ENCODE measurements at regions of chr6 and their contacts with region 1.

Region 1: GRCh38 chr6:28880894-28881780 is 42.6 kb downstream of the TRIM27 start:
- DNase-seq: peak; percentile 51 to 83 (median 68)
- H3K4me3 ChIP-seq: peak overlapping the region; percentile 33 to 79 (median 64)
- H3K27ac ChIP-seq: peak overlapping the region in 13 of 59 donors; percentile 0 to 55 (median 17)
- H3K27me3 ChIP-seq: peaks cover 0 to 45% (median 2%) of the 10 kb centered on the region in 45 donors
- CTCF ChIP-seq: peak in 4 of 56 donors; percentile 13 to 23 (median 18)

Region 2: GRCh38 chr6:28863604-28864320 is 17.4 kb before region 1 on chr6:
- intact Hi-C with region 1: loop called in 1 of 2 experiments (anchors 2 kb)
- DNase-seq: peak; percentile 67 to 87 (median 79)
- H3K4me3 ChIP-seq: peak overlapping the region; percentile 52 to 97 (median 82)
- H3K27ac ChIP-seq: peak overlapping the region in 56 of 59 donors; percentile 1 to 92 (median 74)
- H3K27me3 ChIP-seq: no peaks in the 10 kb centered on the region
- CTCF ChIP-seq: peak in 17 of 56 donors; percentile 2 to 40 (median 16)

Region 3: DNA sequence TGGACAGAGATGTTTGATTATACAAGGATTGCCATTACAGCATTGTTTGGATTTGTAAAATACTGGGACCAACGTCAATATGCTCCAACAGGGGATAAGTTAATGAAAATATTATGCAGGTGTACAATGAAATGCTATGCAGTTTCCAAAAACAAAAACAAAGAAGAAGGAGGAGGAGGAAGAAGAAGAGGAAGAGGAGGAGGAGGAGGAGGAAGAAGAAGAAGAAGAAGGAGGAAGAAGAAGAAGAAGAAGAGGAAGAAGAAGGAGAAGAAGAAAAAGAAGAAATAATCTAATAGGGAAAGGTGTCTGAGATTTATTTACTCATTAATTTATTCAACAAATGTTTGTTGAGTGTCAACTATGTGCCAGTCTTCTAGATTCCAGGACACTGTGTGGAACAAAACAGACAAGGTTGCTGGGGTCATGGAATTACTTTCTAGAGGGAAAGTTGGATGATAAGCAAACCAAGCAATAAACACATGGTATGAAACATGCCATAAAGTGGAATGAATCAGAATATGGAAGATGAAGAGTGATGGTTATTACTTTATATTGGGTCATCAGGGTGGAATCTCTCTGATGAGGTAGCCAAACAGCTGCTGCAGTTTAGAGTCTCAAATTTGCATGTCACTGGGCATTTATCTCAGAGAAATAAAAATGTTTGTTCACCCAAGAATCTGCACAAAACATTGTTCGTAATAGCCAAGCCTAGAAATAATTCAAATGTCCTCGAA is 48.9 kb after region 1 on chr6:
- intact Hi-C with region 1: no loop called
- DNase-seq: no peak
- H3K4me3 ChIP-seq: no peak overlapping the region
- H3K27ac ChIP-seq: no peak overlapping the region
- H3K27me3 ChIP-seq: peaks cover 0 to 4% (median 0%) of the 10 kb centered on the region in 45 donors
- CTCF ChIP-seq: no peak

Region 4: DNA sequence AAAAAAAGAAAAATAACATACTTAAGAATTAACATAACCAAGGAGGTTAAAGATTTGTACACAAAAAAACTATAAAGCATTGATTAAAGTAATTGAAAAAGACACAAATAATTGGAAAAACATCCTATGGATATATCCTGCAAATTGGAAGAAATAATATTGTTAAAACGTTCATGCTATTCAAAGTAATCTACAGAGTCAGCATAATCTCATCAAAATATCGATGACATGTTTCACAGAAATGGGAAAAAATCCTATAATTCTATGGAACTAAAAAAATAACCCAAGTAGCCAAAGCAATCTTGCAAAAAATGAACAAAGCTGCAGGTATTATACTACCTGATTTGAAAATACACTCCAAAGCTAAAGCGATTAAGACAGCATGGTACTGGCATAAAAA is 464.2 kb after region 1 on chr6:
- intact Hi-C with region 1: no loop called
- DNase-seq: no peak
- H3K4me3 ChIP-seq: no peak overlapping the region
- H3K27ac ChIP-seq: no peak overlapping the region
- H3K27me3 ChIP-seq: peaks cover 0 to 8% (median 0%) of the 10 kb centered on the region in 45 donors
- CTCF ChIP-seq: no peak

Region 5: GRCh38 chr6:30113003-30113759 is 1232.0 kb after region 1 on chr6 and contains the start of gene TRIM31:
- intact Hi-C with region 1: no loop called
- DNase-seq: no peak
- H3K4me3 ChIP-seq: no peak within 1 kb of the TSS
- H3K27ac ChIP-seq: no peak within 1 kb of the TSS
- H3K27me3 ChIP-seq: peaks cover 0 to 89% (median 49%) of the 10 kb centered on the region in 45 donors
- CTCF ChIP-seq: no peak
- total RNA-seq, gene TRIM31: not detected

Measured in dorsolateral prefrontal cortex (tissue), 120 donors.